ENCODE measurements at regions of chr7 and their contacts with region 1.

Region 1: DNA sequence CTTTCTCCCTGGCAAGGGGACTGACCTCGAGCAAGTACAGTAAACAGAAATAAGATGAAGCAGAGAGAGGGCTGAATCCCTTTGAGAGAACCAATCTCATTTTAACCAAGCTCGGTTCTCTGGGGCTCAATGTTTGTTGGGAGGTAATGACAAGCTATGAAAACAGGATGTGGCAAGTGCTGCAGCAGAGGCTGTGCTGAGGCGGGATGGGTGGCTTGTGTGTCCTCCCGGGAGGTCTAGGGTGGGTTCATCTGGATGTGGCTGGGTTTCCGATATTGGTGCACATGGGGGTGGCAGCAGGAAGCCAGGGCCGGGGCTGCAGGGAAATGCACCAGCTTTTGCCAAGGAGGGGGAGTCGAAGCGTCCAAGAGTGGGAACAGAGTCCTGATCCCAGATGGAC is 84.5 kb downstream of the AOAH start:
- DNase-seq: peak; percentile 14 to 81 (median 67)
- ATAC-seq: peak; percentile 88
- H3K4me3 ChIP-seq: peak overlapping the region; percentile 3
- H3K4me3 Mint-ChIP-seq: peak overlapping the region; percentile 54 to 83 (median 67)
- H3K27ac ChIP-seq: peak overlapping the region; percentile 67
- H3K27ac Mint-ChIP-seq: peak overlapping the region; percentile 85 to 99 (median 95)
- H3K4me1 ChIP-seq: peaks cover 46 to 70% of the 10 kb centered on the region in 2 donors
- H3K4me1 Mint-ChIP-seq: peaks cover 42 to 100% (median 95%) of the 10 kb centered on the region in 7 donors
- H3K27me3 ChIP-seq: no peaks in the 10 kb centered on the region
- H3K27me3 Mint-ChIP-seq: no peaks in the 10 kb centered on the region

Region 2: DNA sequence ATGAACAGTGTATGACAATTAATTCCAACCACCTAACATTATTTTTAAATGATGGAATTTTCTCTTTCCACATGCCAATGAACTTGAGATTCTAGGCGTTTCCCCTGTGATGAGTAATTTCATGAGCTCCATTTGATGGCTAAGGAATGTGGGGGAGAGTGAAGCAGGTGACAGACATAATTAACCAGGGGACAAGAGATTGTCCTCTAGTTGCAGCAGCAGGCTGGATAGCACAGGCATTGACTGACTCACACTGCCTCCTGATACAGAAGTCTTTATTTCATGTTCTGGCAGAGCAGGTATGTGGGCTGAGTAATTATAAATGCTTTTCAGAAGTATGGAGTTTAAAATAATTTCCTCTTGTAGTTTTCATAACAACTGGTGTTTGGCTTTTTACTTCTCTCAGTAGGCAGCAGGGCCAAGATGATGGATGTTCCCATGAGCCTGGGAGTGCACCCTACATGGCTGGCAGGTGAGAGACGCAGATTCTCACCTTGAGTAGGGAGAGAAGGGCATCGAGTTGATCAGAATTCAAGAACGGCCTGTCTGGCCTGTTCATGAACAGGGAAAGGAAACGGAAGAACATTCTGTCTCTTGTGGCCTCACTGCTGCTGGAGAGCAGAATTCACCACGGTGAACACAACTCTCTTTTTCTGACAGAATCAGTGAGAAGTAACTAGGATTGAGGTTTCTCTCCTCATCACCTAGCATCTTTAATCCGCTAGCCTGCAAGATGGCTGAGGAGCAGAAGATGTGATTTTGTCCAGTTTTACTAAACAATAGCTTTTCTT is 34.4 kb before region 1 on chr7:
- CTCF ChIA-PET with region 1: interaction called, 4 read pairs
- POLR2A ChIA-PET with region 1: interaction called, 16 read pairs
- intact Hi-C with region 1: loop called in 1 of 2 experiments (anchors 1 kb)
- DNase-seq: peak in 5 of 9 donors; percentile 9 to 25 (median 20)
- ATAC-seq: no peak
- H3K4me3 ChIP-seq: no peak overlapping the region
- H3K4me3 Mint-ChIP-seq: peak overlapping the region in 8 of 10 donors; percentile 57 to 86 (median 66)
- H3K27ac ChIP-seq: peak overlapping the region; percentile 31
- H3K27ac Mint-ChIP-seq: peak overlapping the region in 8 of 9 donors; percentile 64 to 93 (median 90)
- H3K4me1 ChIP-seq: peaks cover 0 to 49% of the 10 kb centered on the region in 2 donors
- H3K4me1 Mint-ChIP-seq: peaks cover 41 to 84% (median 69%) of the 10 kb centered on the region in 7 donors
- H3K27me3 ChIP-seq: no peaks in the 10 kb centered on the region
- H3K27me3 Mint-ChIP-seq: no peaks in the 10 kb centered on the region

Region 3: GRCh38 chr7:36620166-36620708 is 19.6 kb before region 1 on chr7:
- CTCF ChIA-PET with region 1: no interaction called
- POLR2A ChIA-PET with region 1: interaction called, 10 read pairs
- intact Hi-C with region 1: loop called in 1 of 2 experiments (anchors 2 kb)
- DNase-seq: no peak
- ATAC-seq: peak; percentile 45
- H3K4me3 ChIP-seq: no peak overlapping the region
- H3K4me3 Mint-ChIP-seq: no peak overlapping the region
- H3K27ac ChIP-seq: no peak overlapping the region
- H3K27ac Mint-ChIP-seq: peak overlapping the region in 1 of 9 donors; percentile 13
- H3K4me1 ChIP-seq: peaks cover 0 to 6% of the 10 kb centered on the region in 2 donors
- H3K4me1 Mint-ChIP-seq: peaks cover 20 to 44% (median 34%) of the 10 kb centered on the region in 7 donors
- H3K27me3 ChIP-seq: no peaks in the 10 kb centered on the region
- H3K27me3 Mint-ChIP-seq: no peaks in the 10 kb centered on the region

Region 4: DNA sequence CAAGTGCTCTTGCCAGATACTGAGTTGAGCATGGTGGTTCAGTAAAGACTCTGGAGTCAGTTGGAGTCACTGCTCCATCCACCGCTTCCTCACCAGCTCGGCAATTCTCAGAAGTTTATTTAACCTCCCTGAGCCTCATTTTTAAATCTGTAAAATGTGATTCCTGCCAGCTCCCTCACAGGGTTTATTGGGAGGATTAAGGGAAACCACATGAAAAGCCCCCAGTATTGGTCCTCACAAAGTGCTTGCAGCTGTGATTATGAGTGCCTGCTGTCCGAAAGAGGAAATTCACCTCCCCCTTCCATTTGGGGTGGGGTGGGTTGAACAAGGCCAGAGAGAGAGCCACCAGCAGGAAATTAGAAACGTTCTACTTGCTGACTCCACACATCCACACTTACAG is 14.6 kb before region 1 on chr7:
- CTCF ChIA-PET with region 1: interaction called, 3 read pairs
- POLR2A ChIA-PET with region 1: interaction called, 10 read pairs
- intact Hi-C with region 1: loop called in 1 of 2 experiments (anchors 2 kb)
- DNase-seq: no peak
- ATAC-seq: no peak
- H3K4me3 ChIP-seq: no peak overlapping the region
- H3K4me3 Mint-ChIP-seq: peak overlapping the region in 1 of 10 donors; percentile 0
- H3K27ac ChIP-seq: no peak overlapping the region
- H3K27ac Mint-ChIP-seq: peak overlapping the region in 3 of 9 donors; percentile 8 to 84 (median 69)
- H3K4me1 ChIP-seq: peaks cover 0 to 6% of the 10 kb centered on the region in 2 donors
- H3K4me1 Mint-ChIP-seq: peaks cover 21 to 57% (median 40%) of the 10 kb centered on the region in 7 donors
- H3K27me3 ChIP-seq: no peaks in the 10 kb centered on the region
- H3K27me3 Mint-ChIP-seq: no peaks in the 10 kb centered on the region

Region 5: GRCh38 chr7:36653008-36653670 is 13.3 kb after region 1 on chr7:
- CTCF ChIA-PET with region 1: interaction called, 3 read pairs
- POLR2A ChIA-PET with region 1: interaction called, 33 read pairs
- intact Hi-C with region 1: loop called in 1 of 2 experiments (anchors 1 kb)
- DNase-seq: no peak
- ATAC-seq: no peak
- H3K4me3 ChIP-seq: no peak overlapping the region
- H3K4me3 Mint-ChIP-seq: peak overlapping the region in 1 of 10 donors; percentile 29
- H3K27ac ChIP-seq: no peak overlapping the region
- H3K27ac Mint-ChIP-seq: peak overlapping the region in 3 of 9 donors; percentile 42 to 71 (median 68)
- H3K4me1 ChIP-seq: peaks cover 7 to 8% of the 10 kb centered on the region in 2 donors
- H3K4me1 Mint-ChIP-seq: peaks cover 15 to 63% (median 34%) of the 10 kb centered on the region in 7 donors
- H3K27me3 ChIP-seq: no peaks in the 10 kb centered on the region
- H3K27me3 Mint-ChIP-seq: no peaks in the 10 kb centered on the region